Activated CD8-positive, alpha-beta memory T cell treated with anti-CD3 and anti-CD28 coated beads, Interleukin-2, amount 10 ng/mL, durations not matched to agents 7 days and 5 days (primary cell): ENCODE measurements at regions of chr11 and their contacts with region 1.

Region 1: DNA sequence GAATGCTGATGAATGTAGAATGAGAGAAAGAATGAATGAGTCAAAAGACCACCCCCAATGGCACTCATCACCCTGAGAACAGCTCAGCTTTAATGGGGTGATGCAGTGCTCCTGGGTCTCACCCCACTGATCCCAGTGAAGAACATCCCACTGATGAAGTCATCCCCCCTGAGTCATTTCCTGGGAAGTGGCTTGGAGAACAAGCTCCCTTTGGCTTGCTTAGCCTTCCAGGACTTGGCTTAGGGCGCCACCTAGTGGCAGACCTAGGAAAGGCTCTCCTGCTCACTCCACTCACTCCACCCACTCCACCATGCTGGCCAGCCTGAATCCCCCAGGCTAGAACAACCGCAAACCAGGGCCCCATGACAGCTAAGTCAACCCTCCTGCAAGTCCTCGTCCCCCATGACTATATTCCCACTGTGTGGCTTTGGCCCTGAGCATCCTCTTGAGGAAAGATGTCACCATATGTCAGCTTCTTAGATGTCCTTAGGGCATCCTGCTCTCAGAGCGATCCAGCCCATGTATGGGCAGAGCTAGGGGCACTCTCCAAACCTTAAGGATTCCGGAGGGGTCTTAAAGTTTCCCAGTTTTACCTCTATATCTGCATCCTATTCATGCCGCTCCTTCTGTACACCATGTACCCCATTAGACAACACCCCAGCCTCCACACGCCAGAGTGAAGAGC is 17.8 kb upstream of the TMPRSS13 start:
- DNase-seq: peak; percentile 89
- ATAC-seq: peak; percentile 47
- H3K4me3 Mint-ChIP-seq: no peak overlapping the region
- H3K27ac Mint-ChIP-seq: peak overlapping the region; percentile 68
- H3K4me1 Mint-ChIP-seq: peaks cover 85% of the 10 kb centered on the region
- H3K27me3 Mint-ChIP-seq: no peaks in the 10 kb centered on the region

Region 2: GRCh38 chr11:117807482-117808327 is 139.3 kb before region 1 on chr11:
- CTCF ChIA-PET with region 1: interaction called, 90 read pairs
- DNase-seq: peak; percentile 85
- ATAC-seq: peak; percentile 70
- H3K4me3 Mint-ChIP-seq: no peak overlapping the region
- H3K27ac Mint-ChIP-seq: no peak overlapping the region
- H3K4me1 Mint-ChIP-seq: peaks cover 22% of the 10 kb centered on the region
- H3K27me3 Mint-ChIP-seq: peaks cover 2% of the 10 kb centered on the region

Region 3: DNA sequence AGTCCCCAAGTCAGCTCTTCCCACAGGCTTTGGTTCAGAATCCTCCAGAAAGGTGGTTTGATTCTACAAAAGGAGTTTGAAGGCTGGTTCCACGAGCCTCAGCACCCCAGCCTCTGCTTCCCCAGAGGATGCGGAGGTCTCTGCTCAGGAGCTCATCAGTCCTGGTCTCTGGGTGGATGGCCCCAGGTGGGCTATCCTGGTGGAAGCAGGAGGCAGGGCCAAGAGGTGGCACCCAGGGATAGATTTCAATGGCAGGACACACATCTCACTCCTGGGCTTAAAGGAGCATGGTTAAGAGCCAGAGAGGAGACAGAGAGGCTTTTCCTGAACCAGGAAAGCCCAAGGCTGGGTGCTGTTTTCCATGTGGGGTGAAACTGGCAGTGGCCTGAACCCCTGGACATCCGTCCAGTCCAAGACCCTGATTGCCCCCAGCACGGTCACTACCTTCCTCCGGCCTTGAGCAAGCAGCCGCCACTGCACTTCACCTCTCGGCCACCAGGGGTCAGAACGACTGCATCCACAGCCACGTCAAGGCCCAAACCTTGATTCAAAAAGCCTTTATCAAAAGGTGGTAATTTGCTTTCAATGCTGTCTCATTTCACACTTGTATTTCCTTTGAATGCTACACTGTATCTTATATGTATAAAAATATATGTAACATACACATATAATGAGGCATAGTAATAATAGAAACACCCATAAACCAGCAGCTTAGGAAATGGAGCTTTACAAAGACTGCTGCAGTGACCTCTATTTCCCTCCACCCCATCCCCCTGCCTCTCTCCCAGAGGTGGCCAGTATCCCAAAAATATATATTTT is 103.1 kb before region 1 on chr11:
- CTCF ChIA-PET with region 1: interaction called, 173 read pairs
- DNase-seq: peak; percentile 87
- ATAC-seq: peak; percentile 86
- H3K4me3 Mint-ChIP-seq: no peak overlapping the region
- H3K27ac Mint-ChIP-seq: no peak overlapping the region
- H3K4me1 Mint-ChIP-seq: peaks cover 7% of the 10 kb centered on the region
- H3K27me3 Mint-ChIP-seq: peaks cover 14% of the 10 kb centered on the region

Region 4: DNA sequence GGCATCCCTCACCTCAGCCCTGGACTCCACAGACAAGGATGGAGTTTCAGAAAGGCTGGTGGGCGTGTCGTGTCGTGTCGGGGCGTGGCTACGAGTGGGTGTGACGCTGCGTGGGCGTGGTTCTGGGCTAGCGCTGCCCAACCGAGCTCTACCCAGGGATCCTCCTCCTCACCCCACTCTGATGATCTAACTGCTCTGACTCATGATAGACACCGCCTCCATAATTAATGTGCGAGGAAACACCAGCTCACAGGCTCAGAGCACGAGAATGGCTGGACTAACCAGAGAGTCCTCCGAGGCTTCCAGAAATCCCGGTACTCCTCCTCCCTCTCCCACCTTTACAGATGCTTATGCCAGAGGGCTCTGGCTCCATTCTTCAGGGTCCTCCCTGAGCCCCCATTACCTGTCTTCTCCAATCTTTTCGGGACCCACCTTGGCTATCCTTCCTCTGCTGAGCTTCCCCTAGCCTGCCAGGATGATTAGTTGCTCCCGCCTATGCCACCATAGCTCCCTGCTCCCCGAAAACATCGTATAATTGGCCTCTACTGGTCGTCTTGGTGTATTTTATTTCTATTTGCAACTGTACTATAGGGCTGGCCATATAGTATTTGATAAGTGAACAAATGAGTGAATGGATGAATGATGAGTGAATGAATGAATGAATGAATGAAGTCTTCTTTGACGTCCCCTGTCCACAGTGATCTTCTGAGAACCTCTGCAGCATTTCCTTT is 39.6 kb before region 1 on chr11:
- CTCF ChIA-PET with region 1: interaction called, 19 read pairs
- DNase-seq: peak; percentile 84
- ATAC-seq: peak; percentile 97
- H3K4me3 Mint-ChIP-seq: peak overlapping the region; percentile 29
- H3K27ac Mint-ChIP-seq: peak overlapping the region; percentile 65
- H3K4me1 Mint-ChIP-seq: peaks cover 19% of the 10 kb centered on the region
- H3K27me3 Mint-ChIP-seq: no peaks in the 10 kb centered on the region

Region 5: DNA sequence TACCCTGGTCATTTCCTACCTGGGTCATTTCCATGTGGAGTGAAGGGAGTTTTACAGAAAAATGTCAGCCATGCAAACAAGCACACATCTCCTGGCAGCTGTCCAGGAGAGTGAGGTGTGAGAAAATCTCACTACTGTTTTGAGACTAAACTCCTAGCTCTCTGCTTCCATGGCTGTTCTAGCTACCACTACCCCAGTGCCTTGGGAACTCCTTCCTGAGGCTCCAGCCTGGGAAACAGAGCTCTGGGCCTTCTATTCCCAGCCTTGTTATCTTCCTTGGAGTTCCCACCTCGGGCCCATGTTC is 15.0 kb before region 1 on chr11:
- CTCF ChIA-PET with region 1: interaction called, 147 read pairs
- DNase-seq: peak; percentile 71
- ATAC-seq: no peak
- H3K4me3 Mint-ChIP-seq: no peak overlapping the region
- H3K27ac Mint-ChIP-seq: peak overlapping the region; percentile 95
- H3K4me1 Mint-ChIP-seq: peaks cover 81% of the 10 kb centered on the region
- H3K27me3 Mint-ChIP-seq: peaks cover 7% of the 10 kb centered on the region

Region 6: GRCh38 chr11:117985953-117986887 is 39.2 kb after region 1 on chr11 and contains the start of gene IL10RA:
- CTCF ChIA-PET with region 1: interaction called, 459 read pairs
- DNase-seq: peak; percentile 90
- ATAC-seq: peak; percentile 91
- H3K4me3 Mint-ChIP-seq: peak within 1 kb of the TSS; percentile 96
- H3K27ac Mint-ChIP-seq: peak within 1 kb of the TSS; percentile 97
- H3K4me1 Mint-ChIP-seq: peaks cover 70% of the 10 kb centered on the region
- H3K27me3 Mint-ChIP-seq: no peaks in the 10 kb centered on the region
- total RNA-seq, gene IL10RA: 247 to 260 TPM